GM12878 (cell line): ENCODE measurements at regions of chr2 and their contacts with region 1.

Region 1: GRCh38 chr2:224952936-224953657 is 89.2 kb downstream of the DOCK10 start:
- DNase-seq: no peak
- ATAC-seq: peak; percentile 74
- H3K4me3 ChIP-seq: no peak overlapping the region
- H3K27ac ChIP-seq: 0 out of 2 replicates have a peak overlapping the region, but pooled peaks have one; percentile 6
- H3K4me1 ChIP-seq: peaks cover 74% of the 10 kb centered on the region
- H3K27me3 ChIP-seq: no peaks in the 10 kb centered on the region
- CTCF ChIP-seq: no peak
- EP300 ChIP-seq: no peak
- POLR2A ChIP-seq: no peak
- RAD21 ChIP-seq: no peak

Region 2: GRCh38 chr2:224973112-224974016 is 20.3 kb after region 1 on chr2:
- CTCF ChIA-PET with region 1: interaction called, 4 read pairs
- POLR2A ChIA-PET with region 1: interaction called, 3 read pairs
- RAD21 ChIA-PET with region 1: interaction called, 7 read pairs
- SMC1A ChIA-PET with region 1: interaction called, 11 read pairs
- in situ Hi-C with region 1: no loop called
- intact Hi-C with region 1: loop called (anchors 2 kb)
- DNase-seq: no peak
- ATAC-seq: peak; percentile 59
- H3K4me3 ChIP-seq: no peak overlapping the region
- H3K27ac ChIP-seq: no peak overlapping the region
- H3K4me1 ChIP-seq: peaks cover 32% of the 10 kb centered on the region
- H3K27me3 ChIP-seq: no peaks in the 10 kb centered on the region
- CTCF ChIP-seq: no peak
- EP300 ChIP-seq: no peak
- POLR2A ChIP-seq: no peak
- RAD21 ChIP-seq: no peak

Region 3: DNA sequence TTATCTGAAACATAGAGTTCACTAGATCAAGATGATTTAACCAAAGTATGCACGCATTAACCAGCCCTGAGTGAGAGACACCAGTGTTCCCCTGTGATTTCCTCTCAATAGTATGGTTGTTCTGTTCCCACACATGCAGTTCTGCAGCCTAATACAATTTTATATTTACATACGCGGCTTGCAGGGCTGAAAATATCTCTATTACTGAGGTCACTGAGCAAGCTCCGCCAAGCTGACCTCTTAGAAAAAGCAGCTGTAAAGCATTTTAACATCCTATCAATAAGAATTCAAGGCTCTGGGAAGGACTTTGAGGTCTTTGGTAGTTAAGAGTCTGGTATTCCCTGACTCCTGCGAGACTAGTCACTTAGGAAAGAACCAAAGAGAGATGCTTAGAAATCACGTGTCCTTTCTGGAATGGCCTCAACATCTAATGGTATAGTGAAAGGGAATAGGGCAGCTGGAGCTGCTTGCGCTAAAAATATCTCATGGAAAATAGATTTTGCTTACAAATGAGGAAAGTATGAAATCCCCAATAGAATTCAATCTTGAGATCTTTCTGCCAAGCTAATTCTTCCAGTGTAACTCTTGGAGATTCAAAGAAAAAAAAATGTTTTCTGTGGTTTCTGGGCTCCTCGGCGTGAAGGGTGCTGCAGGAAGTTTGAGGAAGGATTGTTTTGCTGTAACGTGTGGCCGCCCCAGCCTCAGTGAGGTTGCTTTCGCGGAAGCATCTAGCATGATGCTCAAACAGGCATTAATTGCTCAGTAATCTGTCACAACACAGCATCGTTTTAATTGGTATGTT is 30.0 kb after region 1 on chr2:
- CTCF ChIA-PET with region 1: no interaction called
- POLR2A ChIA-PET with region 1: interaction called, 3 read pairs
- RAD21 ChIA-PET with region 1: interaction called, 5 read pairs
- SMC1A ChIA-PET with region 1: interaction called, 10 read pairs
- in situ Hi-C with region 1: no loop called
- intact Hi-C with region 1: no loop called
- DNase-seq: peak; percentile 61
- ATAC-seq: peak; percentile 85
- H3K4me3 ChIP-seq: peak overlapping the region; percentile 9
- H3K27ac ChIP-seq: peak overlapping the region; percentile 60
- H3K4me1 ChIP-seq: peaks cover 21% of the 10 kb centered on the region
- H3K27me3 ChIP-seq: no peaks in the 10 kb centered on the region
- CTCF ChIP-seq: no peak
- EP300 ChIP-seq: no peak
- POLR2A ChIP-seq: no peak
- RAD21 ChIP-seq: no peak